Calu3 (cell line): ENCODE measurements at regions of chr4 and their contacts with region 1.

Region 1: DNA sequence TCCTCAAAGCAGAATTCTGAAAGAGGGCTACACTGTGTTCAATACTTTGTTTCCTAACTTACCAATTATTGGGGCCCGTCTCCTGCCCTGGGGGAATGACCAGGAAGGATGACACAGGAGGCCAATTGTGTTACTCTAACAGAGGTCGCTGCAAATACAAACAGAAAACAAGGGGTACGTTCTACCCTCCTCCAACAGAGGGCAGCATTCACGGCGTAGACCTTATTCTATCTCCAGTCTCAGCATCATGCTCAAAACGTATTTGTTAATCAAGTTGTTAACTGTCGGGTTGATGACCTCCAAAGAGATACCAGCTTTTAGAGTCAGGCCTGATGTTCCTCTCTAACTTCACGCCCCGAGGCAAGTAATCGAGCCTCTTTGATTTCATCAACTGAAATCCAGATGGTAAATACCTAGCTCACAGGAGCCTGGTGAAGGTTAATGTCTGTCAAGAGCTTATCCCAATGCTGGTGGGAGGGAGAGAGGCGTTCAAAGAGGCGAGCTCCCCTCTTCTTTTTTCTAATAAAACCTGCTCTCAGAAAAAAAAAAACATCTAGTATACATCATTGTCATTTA is 181.0 kb upstream of the KCNIP4 start:
- DNase-seq: peak; percentile 40
- H3K4me3 Mint-ChIP-seq: no peak overlapping the region
- H3K27ac Mint-ChIP-seq: no peak overlapping the region
- H3K4me1 Mint-ChIP-seq: no peaks in the 10 kb centered on the region
- H3K27me3 Mint-ChIP-seq: no peaks in the 10 kb centered on the region
- CTCF ChIP-seq: peak; percentile 46

Region 2: GRCh38 chr4:21753084-21753760 is 376.3 kb before region 1 on chr4:
- CTCF ChIA-PET with region 1: no interaction called
- intact Hi-C with region 1: no loop called
- DNase-seq: no peak
- H3K4me3 Mint-ChIP-seq: no peak overlapping the region
- H3K27ac Mint-ChIP-seq: no peak overlapping the region
- H3K4me1 Mint-ChIP-seq: peaks cover 12% of the 10 kb centered on the region
- H3K27me3 Mint-ChIP-seq: no peaks in the 10 kb centered on the region
- CTCF ChIP-seq: no peak

Region 3: GRCh38 chr4:22237155-22237751 is 107.7 kb after region 1 on chr4:
- CTCF ChIA-PET with region 1: no interaction called
- intact Hi-C with region 1: loop called (anchors 10 kb)
- DNase-seq: peak; percentile 70
- H3K4me3 Mint-ChIP-seq: peak overlapping the region; percentile 51
- H3K27ac Mint-ChIP-seq: no peak overlapping the region
- H3K4me1 Mint-ChIP-seq: peaks cover 15% of the 10 kb centered on the region
- H3K27me3 Mint-ChIP-seq: no peaks in the 10 kb centered on the region
- CTCF ChIP-seq: peak; percentile 75

Region 4: GRCh38 chr4:22287631-22288030 is 158.1 kb after region 1 on chr4:
- CTCF ChIA-PET with region 1: no interaction called
- intact Hi-C with region 1: no loop called
- DNase-seq: no peak
- H3K4me3 Mint-ChIP-seq: no peak overlapping the region
- H3K27ac Mint-ChIP-seq: no peak overlapping the region
- H3K4me1 Mint-ChIP-seq: no peaks in the 10 kb centered on the region
- H3K27me3 Mint-ChIP-seq: no peaks in the 10 kb centered on the region
- CTCF ChIP-seq: no peak

Region 5: GRCh38 chr4:22389240-22389870 is 259.8 kb after region 1 on chr4:
- CTCF ChIA-PET with region 1: interaction called, 4 read pairs
- intact Hi-C with region 1: loop called (anchors 10 kb)
- DNase-seq: peak; percentile 38
- H3K4me3 Mint-ChIP-seq: no peak overlapping the region
- H3K27ac Mint-ChIP-seq: no peak overlapping the region
- H3K4me1 Mint-ChIP-seq: no peaks in the 10 kb centered on the region
- H3K27me3 Mint-ChIP-seq: no peaks in the 10 kb centered on the region
- CTCF ChIP-seq: no peak

Region 6: DNA sequence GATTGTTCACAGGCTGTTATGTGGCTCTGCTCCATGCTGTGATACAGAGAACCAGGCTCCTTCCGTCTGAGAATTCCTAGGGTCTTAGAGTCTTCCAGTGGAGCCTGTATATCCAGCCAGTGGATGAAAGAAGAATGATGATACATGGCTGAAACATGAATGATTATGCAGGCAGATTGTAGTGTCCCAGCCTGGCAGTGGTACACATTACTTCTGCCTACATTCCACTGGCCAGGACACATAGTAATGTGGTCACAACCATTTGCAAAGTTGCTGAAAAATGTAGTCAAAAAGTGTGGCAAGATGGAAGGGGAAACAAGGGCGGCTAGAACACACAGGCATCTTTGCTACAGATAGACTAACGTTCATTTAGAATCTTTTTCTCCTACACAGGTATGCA is 558.7 kb after region 1 on chr4:
- CTCF ChIA-PET with region 1: no interaction called
- intact Hi-C with region 1: loop called (anchors 5 kb)
- DNase-seq: no peak
- H3K4me3 Mint-ChIP-seq: no peak overlapping the region
- H3K27ac Mint-ChIP-seq: no peak overlapping the region
- H3K4me1 Mint-ChIP-seq: no peaks in the 10 kb centered on the region
- H3K27me3 Mint-ChIP-seq: no peaks in the 10 kb centered on the region
- CTCF ChIP-seq: no peak